Naive thymus-derived CD8-positive, alpha-beta T cell (primary cell): ENCODE measurements at regions of chr10 and their contacts with region 1.

Region 1: DNA sequence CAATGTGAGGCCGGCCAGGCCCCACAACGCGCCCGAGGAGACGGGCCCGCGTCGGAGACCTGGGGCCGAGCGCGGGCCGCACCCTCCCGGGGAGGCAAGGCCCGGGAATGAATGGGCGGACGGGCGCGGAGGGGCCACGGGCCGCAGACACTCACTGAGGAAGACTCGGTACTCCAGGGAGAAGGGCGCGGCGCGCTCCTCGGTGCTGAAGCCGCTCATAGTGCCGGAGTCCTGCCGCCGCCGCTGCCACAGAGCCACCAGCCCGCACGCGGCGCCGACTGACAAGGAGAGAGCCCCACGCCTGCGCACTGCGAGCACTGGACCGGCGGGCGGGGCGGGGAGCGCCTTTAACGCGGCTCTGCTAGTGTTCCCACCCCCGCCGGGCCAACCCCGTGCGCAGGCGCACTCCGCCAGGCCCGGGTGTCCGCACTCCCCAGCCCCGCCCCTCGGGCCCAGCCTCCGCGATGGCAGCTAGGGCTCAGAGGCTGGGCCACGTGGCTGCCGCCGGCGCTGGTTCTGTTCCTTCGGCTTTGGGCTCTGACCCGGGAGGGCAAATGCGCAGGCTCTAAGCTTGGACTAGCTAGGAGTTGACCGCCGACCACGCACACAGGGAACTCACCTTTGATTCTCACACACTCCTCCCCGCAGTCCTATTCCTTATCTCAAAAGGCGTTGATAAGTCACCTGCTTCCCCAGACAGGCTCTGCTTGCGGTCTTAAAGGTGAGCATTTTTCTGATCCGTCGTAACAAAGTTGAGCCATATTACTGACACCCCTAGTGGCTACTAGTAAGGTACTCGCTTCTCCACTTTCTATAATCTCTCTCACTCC is at the start of gene PPA1:
- DNase-seq: peak; percentile 96 to 100 (median 99)
- ATAC-seq: peak; percentile 91 to 93
- H3K4me3 Mint-ChIP-seq: peak within 1 kb of the TSS; percentile 73 to 96 (median 90)
- H3K27ac Mint-ChIP-seq: peak within 1 kb of the TSS; percentile 72 to 99 (median 95)
- H3K4me1 Mint-ChIP-seq: peaks cover 14 to 36% (median 31%) of the 10 kb centered on the region in 4 donors
- H3K27me3 Mint-ChIP-seq: peaks cover 0 to 1% (median 0%) of the 10 kb centered on the region in 5 donors
- polyA plus RNA-seq, gene PPA1: 137 to 222 (median 154) TPM

Region 2: DNA sequence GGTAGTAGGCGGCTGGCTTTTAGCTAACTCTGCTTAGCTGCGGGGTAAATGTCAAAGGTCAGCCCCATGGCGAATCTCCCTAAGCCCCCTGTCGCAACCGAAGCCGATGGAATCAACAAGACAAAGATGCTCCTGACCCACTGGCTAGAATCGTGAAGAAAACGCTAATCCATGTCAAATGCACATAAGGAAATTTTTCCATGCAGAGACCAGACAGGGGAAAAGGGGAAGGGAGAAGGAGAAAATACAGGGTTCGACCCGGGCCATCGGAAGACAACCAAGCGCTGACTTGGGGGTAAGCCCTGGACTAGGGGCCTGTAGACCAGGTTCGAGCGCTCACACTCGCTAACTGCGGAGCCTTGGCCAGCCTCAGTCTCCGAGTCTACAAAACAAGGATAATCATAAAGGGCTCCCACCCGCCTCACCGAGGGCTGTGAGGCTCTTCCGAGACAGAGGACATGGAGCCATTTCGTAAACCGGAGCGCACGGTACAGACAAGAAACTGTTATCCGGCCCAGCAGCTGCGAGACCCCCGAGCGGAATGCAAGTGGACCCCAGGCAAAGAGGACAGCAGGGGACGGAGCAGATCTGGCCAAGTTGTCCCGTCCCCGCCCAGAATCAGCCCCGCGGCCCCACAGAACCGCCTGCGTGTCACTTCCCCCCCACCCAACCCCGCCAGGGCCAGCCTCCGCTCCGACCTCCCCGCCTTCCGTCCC is 63.5 kb before region 1 on chr10:
- POLR2A ChIA-PET with region 1: interaction called, 25 read pairs
- DNase-seq: peak in 3 of 10 donors; percentile 9 to 19 (median 13)
- ATAC-seq: peak; percentile 26 to 27
- H3K4me3 Mint-ChIP-seq: peak overlapping the region; percentile 87 to 96 (median 92)
- H3K27ac Mint-ChIP-seq: peak overlapping the region; percentile 81 to 99 (median 96)
- H3K4me1 Mint-ChIP-seq: peaks cover 30 to 67% (median 55%) of the 10 kb centered on the region in 4 donors
- H3K27me3 Mint-ChIP-seq: no peaks in the 10 kb centered on the region

Region 3: DNA sequence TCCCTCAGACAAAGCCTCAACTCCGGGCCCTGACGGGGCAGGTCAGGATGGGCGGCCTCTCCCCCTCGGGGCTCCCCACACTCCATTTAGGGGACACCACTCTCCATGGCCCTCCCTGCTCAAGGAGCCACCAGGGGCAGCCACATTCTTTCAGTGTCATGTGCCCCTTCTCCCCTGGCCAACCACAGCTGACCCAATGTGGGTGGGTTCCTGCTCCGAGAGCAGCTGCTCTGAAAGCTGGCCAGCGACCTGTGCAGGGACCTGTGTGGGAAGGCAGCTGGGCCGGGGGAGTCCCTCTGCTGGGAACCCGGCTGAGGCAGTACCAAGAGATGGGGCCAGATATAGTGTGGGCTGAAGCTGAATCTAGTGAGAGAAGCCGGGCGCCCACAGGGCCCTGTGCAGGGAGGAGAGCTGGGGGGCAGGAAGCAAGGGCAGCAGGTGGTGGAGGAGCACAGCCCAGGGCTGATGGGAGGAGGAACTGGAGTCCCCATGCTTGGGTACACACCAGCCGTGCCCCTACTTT is 91.1 kb after region 1 on chr10:
- POLR2A ChIA-PET with region 1: interaction called, 12 read pairs
- DNase-seq: peak in 5 of 10 donors; percentile 9 to 28 (median 20)
- ATAC-seq: peak; percentile 56 to 60
- H3K4me3 Mint-ChIP-seq: peak overlapping the region in 7 of 10 donors; percentile 7 to 87 (median 55)
- H3K27ac Mint-ChIP-seq: peak overlapping the region; percentile 55 to 97 (median 88)
- H3K4me1 Mint-ChIP-seq: peaks cover 24 to 49% (median 47%) of the 10 kb centered on the region in 4 donors
- H3K27me3 Mint-ChIP-seq: peaks cover 0 to 2% (median 0%) of the 10 kb centered on the region in 5 donors

Region 4: GRCh38 chr10:70404036-70404786 is 170.9 kb after region 1 on chr10 and contains the start of gene EIF4EBP2:
- POLR2A ChIA-PET with region 1: interaction called, 16 read pairs
- DNase-seq: peak; percentile 95 to 99 (median 98)
- ATAC-seq: peak; percentile 62 to 91
- H3K4me3 Mint-ChIP-seq: peak within 1 kb of the TSS; percentile 92 to 98 (median 96)
- H3K27ac Mint-ChIP-seq: peak within 1 kb of the TSS; percentile 90 to 97 (median 94)
- H3K4me1 Mint-ChIP-seq: peaks cover 31 to 49% (median 46%) of the 10 kb centered on the region in 4 donors
- H3K27me3 Mint-ChIP-seq: no peaks in the 10 kb centered on the region
- polyA plus RNA-seq, gene EIF4EBP2: 44.8 to 62.4 (median 47.7) TPM